ENCODE measurements at regions of chr1 and their contacts with region 1.

Region 1: DNA sequence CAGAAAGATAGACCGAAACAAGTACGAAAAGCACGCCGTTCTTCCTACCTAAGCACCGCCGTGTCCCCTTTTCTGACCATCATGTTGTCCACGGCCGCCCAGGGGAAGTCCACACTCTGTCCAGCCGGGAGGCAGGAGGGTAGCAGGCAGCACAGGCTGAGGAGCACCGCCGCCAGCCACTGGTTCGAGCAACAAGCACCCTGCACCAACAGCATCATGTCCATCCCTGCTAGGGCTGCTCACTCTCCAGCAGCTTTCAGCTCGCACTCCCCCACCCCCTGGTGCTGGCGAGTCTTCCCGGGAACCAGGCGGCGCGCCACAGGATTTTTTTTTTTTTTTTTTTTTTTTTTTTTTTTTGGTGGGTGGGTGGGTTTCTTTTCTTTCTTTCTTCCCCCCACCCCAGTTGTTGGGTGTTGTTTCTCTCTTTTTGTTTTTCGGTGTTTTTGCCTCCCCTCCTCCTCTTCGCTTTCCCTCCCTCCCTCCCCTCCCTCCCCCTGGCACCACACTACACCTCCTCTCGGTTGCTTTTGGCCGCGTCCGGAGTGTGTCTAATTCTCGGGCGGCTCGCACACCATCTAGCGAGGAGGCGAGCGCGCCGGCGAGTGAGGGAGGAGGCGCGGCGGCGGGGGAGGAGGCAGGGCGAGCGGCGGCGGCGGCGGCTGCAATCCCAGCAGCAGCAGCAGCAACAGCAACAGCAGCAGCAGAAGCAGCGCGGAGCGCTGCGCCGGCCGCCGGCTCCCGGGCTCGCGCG is at the start of gene NEGR1:
- DNase-seq: peak; percentile 74 to 77
- ATAC-seq: peak; percentile 96
- total RNA-seq, gene NEGR1: 4.2 to 13.1 TPM

Region 2: GRCh38 chr1:72062584-72062983 is 219.9 kb before region 1 on chr1:
- intact Hi-C with region 1: loop called in 1 of 2 experiments (anchors 10 kb)
- DNase-seq: no peak
- ATAC-seq: no peak

Region 3: DNA sequence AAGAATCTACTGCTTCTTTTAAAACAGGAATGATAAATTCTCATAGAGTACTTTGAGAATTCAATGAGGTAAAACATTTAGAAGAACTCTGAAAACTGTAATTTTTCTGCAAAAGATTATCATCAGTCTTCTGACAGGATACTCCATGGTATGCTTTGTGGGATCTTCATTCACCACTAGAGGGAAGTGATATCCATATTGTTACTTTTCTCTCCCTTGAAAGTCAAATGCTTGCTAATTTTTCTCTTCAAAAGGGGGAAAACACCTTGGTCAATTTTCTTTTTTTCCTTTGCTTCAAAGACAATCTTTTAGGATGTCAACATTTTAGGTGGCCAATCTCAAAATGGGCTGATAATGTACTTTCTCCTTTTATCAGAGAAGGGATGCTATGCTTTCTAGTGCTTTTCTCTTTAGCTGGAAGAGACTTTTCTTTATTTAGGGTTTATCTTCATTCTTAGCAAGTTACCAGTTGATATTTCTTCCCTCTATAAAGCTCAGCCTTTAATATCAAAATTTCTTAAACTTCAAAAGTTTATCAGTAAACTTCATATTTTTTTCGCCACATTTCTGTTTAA is 95.6 kb before region 1 on chr1:
- intact Hi-C with region 1: no loop called
- DNase-seq: no peak
- ATAC-seq: no peak

Measured in left colon (tissue), 2 donors.